ENCODE measurements at regions of chr6 and their contacts with region 1.

Region 1: DNA sequence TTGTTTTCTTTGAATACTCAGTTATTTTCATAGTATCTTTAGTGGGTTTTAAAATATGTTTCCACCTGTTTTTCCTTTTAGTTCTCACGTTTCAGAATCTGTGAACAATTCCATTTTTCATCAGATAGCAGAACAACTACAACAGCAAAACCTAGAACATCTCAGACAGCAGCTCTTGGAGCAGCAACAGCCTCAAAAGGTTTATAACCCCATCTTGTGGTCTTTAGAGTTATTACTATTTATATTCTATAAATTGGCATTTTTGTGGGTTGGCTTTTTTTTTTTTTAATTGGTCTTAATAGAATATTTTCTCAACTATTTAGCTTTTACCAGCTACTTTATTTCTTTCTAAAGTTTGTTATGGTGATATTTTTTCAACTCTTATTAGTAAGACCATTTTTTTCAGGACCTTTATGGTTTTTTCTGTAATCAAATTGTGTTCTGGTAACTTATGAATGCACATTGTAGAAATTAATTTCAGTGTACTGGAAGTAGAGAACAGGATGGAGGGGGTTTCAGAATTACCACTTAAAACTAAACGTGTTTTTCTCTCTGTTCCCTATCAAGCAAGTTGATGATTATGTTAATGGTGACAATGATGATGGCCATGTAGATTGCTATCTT is 72.2 kb downstream of the SCAF8 start:
- DNase-seq: peak; percentile 43
- ATAC-seq: peak; percentile 56; the same call in 2 of the 3 replicates
- H3K4me3 ChIP-seq: no peak overlapping the region
- H3K27ac ChIP-seq: no peak overlapping the region
- H3K4me1 ChIP-seq: peaks cover 10% of the 10 kb centered on the region; the same call in 1 of the 2 replicates
- H3K27me3 ChIP-seq: no peaks in the 10 kb centered on the region
- CTCF ChIP-seq: peak; percentile 39
- EP300 ChIP-seq: no peak
- POLR2A ChIP-seq: no peak
- RAD21 ChIP-seq: no peak

Region 2: DNA sequence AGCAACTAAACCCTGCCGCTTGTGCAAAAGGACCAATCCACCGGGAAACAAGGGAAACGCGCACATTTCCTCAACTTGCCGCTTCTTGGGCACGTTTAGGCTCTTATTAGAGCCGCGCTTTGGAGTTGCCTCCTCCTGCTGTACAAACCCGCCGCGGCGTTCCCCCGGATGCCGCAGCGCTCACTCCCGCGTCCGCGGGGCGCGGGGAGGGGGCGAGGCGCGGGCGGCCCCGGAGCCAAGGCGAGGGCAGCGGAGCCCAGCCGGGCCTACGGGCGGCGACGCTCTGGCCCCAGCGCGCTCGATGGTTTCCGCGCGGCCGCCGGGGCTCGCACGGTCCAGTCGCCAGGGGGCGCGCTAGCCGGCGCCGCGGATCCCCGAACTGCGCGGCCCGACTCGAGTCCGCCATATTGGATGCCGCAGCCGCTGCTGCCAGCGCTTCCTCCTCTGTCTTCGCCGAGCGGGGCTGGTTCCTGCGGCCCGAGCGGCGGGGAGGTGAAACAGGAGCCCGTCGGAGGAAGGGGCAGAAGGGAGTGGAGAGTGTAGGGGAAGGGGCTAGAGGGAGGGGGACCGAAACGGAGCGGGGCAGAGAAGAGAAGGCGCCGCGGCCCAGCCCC is 72.3 kb before region 1 on chr6 and contains the start of gene SCAF8:
- CTCF ChIA-PET with region 1: interaction called, 10 read pairs
- POLR2A ChIA-PET with region 1: no interaction called
- in situ Hi-C with region 1: no loop called
- intact Hi-C with region 1: loop called (anchors 1 kb)
- DNase-seq: peak; percentile 73
- ATAC-seq: peak; percentile 85
- H3K4me3 ChIP-seq: peak within 1 kb of the TSS; percentile 75 to 96 (median 81)
- H3K27ac ChIP-seq: peak within 1 kb of the TSS; percentile 99
- H3K4me1 ChIP-seq: peaks cover 48% of the 10 kb centered on the region
- H3K27me3 ChIP-seq: no peaks in the 10 kb centered on the region; a peak in 2 of 5 replicates
- CTCF ChIP-seq: peak; percentile 86
- EP300 ChIP-seq: peak in 1 of 2 experiments; percentile 52; a peak in 3 of 4 replicates
- POLR2A ChIP-seq: peak; percentile 75 to 89
- RAD21 ChIP-seq: peak; percentile 88
- total RNA-seq, gene SCAF8: 40.8 and 47.3 TPM in 2 replicates